ENCODE measurements at regions of chr7 and their contacts with region 1.

Region 1: DNA sequence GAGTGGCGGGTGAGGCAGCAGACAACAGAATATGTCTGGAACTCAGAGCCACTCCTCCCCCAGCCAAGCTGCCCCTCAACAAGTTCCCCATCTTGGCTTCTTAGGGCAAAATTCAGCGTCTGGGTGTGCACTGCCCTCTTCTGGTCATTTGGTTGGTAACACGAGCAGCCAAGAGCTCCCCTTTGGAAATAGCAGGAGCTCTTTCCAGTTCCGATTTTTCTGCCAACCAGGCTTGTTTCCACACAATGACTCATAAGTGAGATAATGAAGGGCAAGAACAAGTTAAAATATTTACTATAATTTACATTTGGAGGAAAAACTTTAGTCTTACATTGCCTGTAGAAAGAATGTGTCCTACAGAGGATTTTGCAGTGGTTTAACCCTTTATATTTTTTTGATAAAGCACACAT is 70.5 kb downstream of the ADCYAP1R1 start:
- DNase-seq: no peak
- H3K4me3 Mint-ChIP-seq: no peak overlapping the region
- H3K27ac Mint-ChIP-seq: no peak overlapping the region
- H3K4me1 Mint-ChIP-seq: no peaks in the 10 kb centered on the region
- H3K27me3 Mint-ChIP-seq: peaks cover 2% of the 10 kb centered on the region

Region 2: DNA sequence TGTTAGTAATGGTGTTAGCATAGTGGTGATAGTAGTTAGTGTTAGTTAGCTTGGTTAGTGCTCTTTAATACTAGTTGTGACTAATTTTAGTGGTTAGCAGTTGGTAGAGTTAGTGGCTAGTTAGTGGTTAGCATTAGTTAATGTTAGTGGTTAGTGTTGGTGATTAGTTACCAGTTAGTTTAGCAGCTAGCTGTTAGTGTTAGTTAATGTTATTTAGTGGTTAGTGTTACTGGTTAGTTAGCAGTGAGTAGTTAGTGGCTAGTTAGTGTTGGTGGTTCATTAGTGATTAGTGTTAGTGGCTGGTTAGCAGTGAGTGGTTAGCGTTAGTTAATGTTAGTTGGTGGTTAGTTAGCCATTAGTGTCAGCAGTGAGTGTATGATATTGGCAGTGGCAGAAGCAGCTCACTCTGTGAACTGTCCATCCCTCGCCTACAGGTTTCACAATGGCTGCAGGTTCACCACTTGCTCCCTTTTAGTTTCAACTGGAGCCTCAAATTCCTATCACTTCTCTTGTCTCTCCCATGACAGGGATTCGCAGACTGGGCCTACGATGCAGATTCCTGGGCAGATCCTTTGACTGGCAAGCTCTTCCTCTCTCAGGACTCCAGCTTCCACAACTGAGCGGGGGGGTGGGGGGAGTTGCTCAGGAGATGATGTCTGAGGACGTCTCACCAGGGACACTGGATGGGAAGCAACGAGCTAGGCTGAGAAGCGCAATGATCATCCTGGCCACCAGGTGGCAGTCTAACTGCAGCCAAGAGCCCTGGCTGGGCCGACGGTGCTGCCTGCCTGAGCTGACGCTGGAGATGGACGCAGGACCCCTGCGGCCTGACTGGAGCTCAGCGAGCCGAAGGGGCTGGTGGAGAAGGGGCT is 139.4 kb before region 1 on chr7:
- intact Hi-C with region 1: loop called (anchors 1 kb)
- DNase-seq: peak; percentile 57
- H3K4me3 Mint-ChIP-seq: no peak overlapping the region
- H3K27ac Mint-ChIP-seq: no peak overlapping the region
- H3K4me1 Mint-ChIP-seq: peaks cover 1% of the 10 kb centered on the region
- H3K27me3 Mint-ChIP-seq: peaks cover 17% of the 10 kb centered on the region

Region 3: GRCh38 chr7:31204071-31204470 is 81.4 kb after region 1 on chr7:
- intact Hi-C with region 1: no loop called
- DNase-seq: no peak
- H3K4me3 Mint-ChIP-seq: no peak overlapping the region
- H3K27ac Mint-ChIP-seq: no peak overlapping the region
- H3K4me1 Mint-ChIP-seq: no peaks in the 10 kb centered on the region
- H3K27me3 Mint-ChIP-seq: no peaks in the 10 kb centered on the region

Region 4: GRCh38 chr7:31735991-31736982 is 613.6 kb after region 1 on chr7:
- intact Hi-C with region 1: no loop called
- DNase-seq: peak; percentile 8
- H3K4me3 Mint-ChIP-seq: no peak overlapping the region
- H3K27ac Mint-ChIP-seq: no peak overlapping the region
- H3K4me1 Mint-ChIP-seq: no peaks in the 10 kb centered on the region
- H3K27me3 Mint-ChIP-seq: no peaks in the 10 kb centered on the region